CD8-positive, alpha-beta T cell (primary cell): ENCODE measurements at regions of chr10 and their contacts with region 1.

Region 1: GRCh38 chr10:110973400-110973799 is 54.0 kb downstream of the SHOC2 start:
- DNase-seq: no peak
- ATAC-seq: no peak
- H3K4me3 ChIP-seq: no peak overlapping the region
- H3K4me3 Mint-ChIP-seq: no peak overlapping the region
- H3K27ac ChIP-seq: no peak overlapping the region
- H3K27ac Mint-ChIP-seq: no peak overlapping the region
- H3K4me1 ChIP-seq: no peaks in the 10 kb centered on the region
- H3K4me1 Mint-ChIP-seq: peaks cover 65% of the 10 kb centered on the region
- H3K27me3 ChIP-seq: no peaks in the 10 kb centered on the region
- H3K27me3 Mint-ChIP-seq: no peaks in the 10 kb centered on the region
- CTCF ChIP-seq: no peak

Region 2: GRCh38 chr10:110916554-110917346 is 56.6 kb before region 1 on chr10:
- CTCF ChIA-PET with region 1: no interaction called
- POLR2A ChIA-PET with region 1: no interaction called
- intact Hi-C with region 1: no loop called
- DNase-seq: no peak
- ATAC-seq: no peak
- H3K4me3 ChIP-seq: no peak overlapping the region
- H3K4me3 Mint-ChIP-seq: no peak overlapping the region
- H3K27ac ChIP-seq: no peak overlapping the region
- H3K27ac Mint-ChIP-seq: peak overlapping the region; percentile 66
- H3K4me1 ChIP-seq: peaks cover 12% of the 10 kb centered on the region
- H3K4me1 Mint-ChIP-seq: peaks cover 38% of the 10 kb centered on the region
- H3K27me3 ChIP-seq: no peaks in the 10 kb centered on the region
- H3K27me3 Mint-ChIP-seq: no peaks in the 10 kb centered on the region
- CTCF ChIP-seq: no peak

Region 3: GRCh38 chr10:110931769-110932381 is 41.5 kb before region 1 on chr10:
- CTCF ChIA-PET with region 1: no interaction called
- POLR2A ChIA-PET with region 1: no interaction called
- intact Hi-C with region 1: loop called in 1 of 2 experiments (anchors 5 kb)
- DNase-seq: no peak
- ATAC-seq: no peak
- H3K4me3 ChIP-seq: no peak overlapping the region
- H3K4me3 Mint-ChIP-seq: no peak overlapping the region
- H3K27ac ChIP-seq: no peak overlapping the region
- H3K27ac Mint-ChIP-seq: no peak overlapping the region
- H3K4me1 ChIP-seq: peaks cover 28% of the 10 kb centered on the region
- H3K4me1 Mint-ChIP-seq: peaks cover 36% of the 10 kb centered on the region
- H3K27me3 ChIP-seq: no peaks in the 10 kb centered on the region
- H3K27me3 Mint-ChIP-seq: no peaks in the 10 kb centered on the region
- CTCF ChIP-seq: no peak

Region 4: GRCh38 chr10:110959379-110960332 is 13.7 kb before region 1 on chr10:
- CTCF ChIA-PET with region 1: no interaction called
- POLR2A ChIA-PET with region 1: interaction called, 3 read pairs
- intact Hi-C with region 1: loop called (anchors 2 kb)
- DNase-seq: no peak
- ATAC-seq: no peak
- H3K4me3 ChIP-seq: no peak overlapping the region
- H3K4me3 Mint-ChIP-seq: no peak overlapping the region
- H3K27ac ChIP-seq: no peak overlapping the region
- H3K27ac Mint-ChIP-seq: no peak overlapping the region
- H3K4me1 ChIP-seq: peaks cover 12% of the 10 kb centered on the region
- H3K4me1 Mint-ChIP-seq: peaks cover 75% of the 10 kb centered on the region
- H3K27me3 ChIP-seq: no peaks in the 10 kb centered on the region
- H3K27me3 Mint-ChIP-seq: no peaks in the 10 kb centered on the region
- CTCF ChIP-seq: no peak

Region 5: DNA sequence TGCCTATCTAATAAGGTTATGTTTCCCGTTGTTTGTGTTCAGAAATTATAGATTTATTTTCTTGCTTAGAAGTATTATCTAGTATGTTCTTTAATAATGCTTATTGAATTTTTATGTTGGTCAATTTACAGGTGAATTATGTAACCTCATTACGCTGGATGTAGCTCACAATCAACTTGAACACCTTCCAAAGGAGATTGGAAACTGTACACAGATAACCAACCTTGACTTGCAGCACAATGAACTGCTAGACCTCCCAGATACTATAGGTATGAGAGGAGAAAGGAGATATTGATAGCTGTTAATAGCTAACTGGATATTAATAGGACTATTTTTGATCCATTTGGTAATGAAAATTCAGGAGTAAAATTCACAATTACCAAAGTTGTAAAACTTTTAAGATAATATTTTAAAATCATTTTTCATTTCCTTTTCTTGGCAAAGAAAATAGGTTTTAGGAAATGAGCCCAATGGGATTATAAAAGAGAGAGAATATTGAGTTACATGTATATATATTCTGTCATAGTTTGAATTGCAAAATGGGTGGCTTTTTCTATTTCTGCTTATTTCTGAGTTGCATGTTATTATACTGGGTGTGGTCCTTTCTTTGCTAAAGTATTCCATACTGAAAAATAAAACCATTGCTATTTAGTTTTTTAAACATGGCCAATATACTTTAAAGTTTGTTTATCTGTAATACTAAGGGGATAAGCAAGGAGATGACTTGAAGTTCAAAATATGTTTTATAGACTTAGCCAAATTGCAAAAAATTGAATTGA is 12.3 kb after region 1 on chr10:
- CTCF ChIA-PET with region 1: no interaction called
- POLR2A ChIA-PET with region 1: no interaction called
- intact Hi-C with region 1: loop called in 1 of 2 experiments (anchors 2 kb)
- DNase-seq: no peak
- ATAC-seq: no peak
- H3K4me3 ChIP-seq: no peak overlapping the region
- H3K4me3 Mint-ChIP-seq: no peak overlapping the region
- H3K27ac ChIP-seq: no peak overlapping the region
- H3K27ac Mint-ChIP-seq: no peak overlapping the region
- H3K4me1 ChIP-seq: peaks cover 6% of the 10 kb centered on the region
- H3K4me1 Mint-ChIP-seq: peaks cover 33% of the 10 kb centered on the region
- H3K27me3 ChIP-seq: no peaks in the 10 kb centered on the region
- H3K27me3 Mint-ChIP-seq: no peaks in the 10 kb centered on the region
- CTCF ChIP-seq: no peak

Region 6: DNA sequence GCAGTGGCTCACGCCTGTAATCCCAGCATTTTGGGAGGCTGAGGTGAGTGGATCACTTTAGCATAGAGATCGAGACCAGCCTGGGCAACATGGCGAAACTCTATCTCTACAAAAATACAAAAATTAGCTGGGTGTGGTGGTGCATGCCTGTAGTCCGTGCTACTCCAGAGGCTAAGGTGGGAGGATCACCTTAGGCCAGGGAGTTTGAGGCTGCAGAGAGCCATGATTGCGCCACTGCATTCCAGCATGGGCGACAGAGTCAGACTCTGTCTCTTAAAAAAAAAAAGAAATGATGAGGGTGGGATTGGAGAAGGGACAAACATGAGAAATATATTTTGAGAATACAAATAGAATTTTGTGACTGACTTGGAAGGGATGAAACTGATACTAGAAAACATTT is 22.9 kb after region 1 on chr10:
- CTCF ChIA-PET with region 1: no interaction called
- POLR2A ChIA-PET with region 1: no interaction called
- intact Hi-C with region 1: no loop called
- DNase-seq: no peak
- ATAC-seq: no peak
- H3K4me3 ChIP-seq: no peak overlapping the region
- H3K4me3 Mint-ChIP-seq: no peak overlapping the region
- H3K27ac ChIP-seq: no peak overlapping the region
- H3K27ac Mint-ChIP-seq: no peak overlapping the region
- H3K4me1 ChIP-seq: peaks cover 29% of the 10 kb centered on the region
- H3K4me1 Mint-ChIP-seq: peaks cover 33% of the 10 kb centered on the region
- H3K27me3 ChIP-seq: no peaks in the 10 kb centered on the region
- H3K27me3 Mint-ChIP-seq: no peaks in the 10 kb centered on the region
- CTCF ChIP-seq: no peak

Region 7: GRCh38 chr10:111017098-111017497 is 43.7 kb after region 1 on chr10:
- CTCF ChIA-PET with region 1: no interaction called
- POLR2A ChIA-PET with region 1: no interaction called
- intact Hi-C with region 1: no loop called
- DNase-seq: no peak
- ATAC-seq: no peak
- H3K4me3 ChIP-seq: no peak overlapping the region
- H3K4me3 Mint-ChIP-seq: no peak overlapping the region
- H3K27ac ChIP-seq: no peak overlapping the region
- H3K27ac Mint-ChIP-seq: no peak overlapping the region
- H3K4me1 ChIP-seq: no peaks in the 10 kb centered on the region
- H3K4me1 Mint-ChIP-seq: peaks cover 3% of the 10 kb centered on the region
- H3K27me3 ChIP-seq: no peaks in the 10 kb centered on the region
- H3K27me3 Mint-ChIP-seq: no peaks in the 10 kb centered on the region
- CTCF ChIP-seq: no peak

Region 8: GRCh38 chr10:111303887-111304286 is 330.5 kb after region 1 on chr10:
- CTCF ChIA-PET with region 1: no interaction called
- POLR2A ChIA-PET with region 1: no interaction called
- intact Hi-C with region 1: no loop called
- DNase-seq: no peak
- ATAC-seq: no peak
- H3K4me3 ChIP-seq: no peak overlapping the region
- H3K4me3 Mint-ChIP-seq: no peak overlapping the region
- H3K27ac ChIP-seq: no peak overlapping the region
- H3K27ac Mint-ChIP-seq: no peak overlapping the region
- H3K4me1 ChIP-seq: no peaks in the 10 kb centered on the region
- H3K4me1 Mint-ChIP-seq: no peaks in the 10 kb centered on the region
- H3K27me3 ChIP-seq: no peaks in the 10 kb centered on the region
- H3K27me3 Mint-ChIP-seq: peaks cover 22% of the 10 kb centered on the region
- CTCF ChIP-seq: no peak